Posterior vena cava (tissue), 2 donors: ENCODE measurements at regions of chr1 and their contacts with region 1.

Region 1: GRCh38 chr1:211578640-211579433 is at the start of gene SLC30A1:
- DNase-seq: peak; percentile 100
- total RNA-seq, gene SLC30A1: 20.7 to 25.8 TPM

Region 2: DNA sequence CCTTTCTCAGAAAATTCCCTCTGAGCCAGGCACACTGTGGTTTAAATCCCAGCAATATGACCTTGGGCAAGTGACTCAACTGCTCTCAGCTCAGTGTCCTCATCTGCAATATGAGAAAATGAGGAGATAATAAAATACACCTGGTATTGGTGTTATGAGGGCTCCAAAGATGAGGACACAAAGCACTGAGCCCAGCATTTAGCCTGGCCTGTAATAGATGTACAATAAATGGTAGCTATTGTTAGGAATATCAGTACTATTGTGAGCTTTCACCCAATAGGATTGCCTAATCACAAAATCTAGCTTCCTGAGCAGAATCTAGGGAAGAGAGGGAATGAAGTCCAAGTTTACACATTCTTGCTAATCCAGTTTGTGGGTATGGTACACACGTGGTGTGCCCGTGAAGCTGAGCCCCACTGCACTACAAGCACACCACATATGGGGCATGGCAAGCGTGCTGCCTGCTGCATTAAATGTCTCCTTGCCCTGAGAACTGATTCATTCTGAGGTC is 24.4 kb after region 1 on chr1:
- intact Hi-C with region 1: no loop called
- DNase-seq: no peak

Region 3: GRCh38 chr1:211648980-211649934 is 70.4 kb after region 1 on chr1:
- intact Hi-C with region 1: loop called (anchors 2 to 10 kb)
- DNase-seq: no peak

Region 4: DNA sequence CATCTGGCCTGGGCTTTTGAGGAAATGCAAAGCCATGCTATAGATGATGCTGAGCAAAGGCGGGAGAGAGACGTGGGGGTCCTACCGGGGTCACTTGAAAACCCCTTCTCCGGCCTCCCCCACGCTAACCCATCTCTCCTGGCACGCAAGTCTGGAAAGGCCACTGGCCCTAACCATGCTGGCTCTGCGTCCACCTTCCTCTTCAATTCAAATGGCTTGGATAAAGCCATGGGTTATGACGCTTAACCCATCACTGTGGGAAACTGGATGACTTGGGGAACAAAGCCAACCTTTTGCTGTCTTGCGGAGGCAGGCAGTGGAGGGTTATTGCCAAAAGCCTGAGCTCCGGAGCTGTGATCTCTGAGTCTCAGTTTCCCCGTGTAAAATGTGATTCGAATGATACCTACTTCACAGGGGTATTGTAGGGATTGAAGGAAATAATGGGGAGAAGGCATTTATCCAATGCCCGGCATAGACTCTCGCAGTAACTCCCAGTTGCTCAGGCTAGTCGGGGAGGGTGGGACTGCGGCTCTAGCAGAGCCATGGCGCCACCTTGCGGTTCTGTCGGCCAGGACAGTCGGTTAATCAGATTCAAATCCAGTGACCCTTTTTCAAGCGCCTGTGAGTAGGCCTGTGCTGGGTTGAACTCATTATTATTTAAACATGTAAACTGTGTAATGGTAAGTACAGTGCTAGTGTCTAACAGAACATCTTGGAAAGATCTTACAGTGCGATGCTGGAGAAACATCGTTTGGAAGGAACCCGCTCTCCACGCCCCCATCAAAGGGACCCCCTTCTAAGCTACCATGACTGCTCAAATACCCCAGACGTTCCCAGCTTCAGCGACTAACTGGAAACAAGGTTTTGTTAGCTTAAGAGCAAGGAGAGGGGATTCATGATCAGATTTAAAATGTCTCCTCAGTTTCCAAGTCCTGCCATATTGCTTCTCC is 76.3 kb after region 1 on chr1:
- intact Hi-C with region 1: loop called in 1 of 2 experiments (anchors 10 kb)
- DNase-seq: peak; percentile 97

Region 5: GRCh38 chr1:212760126-212760823 is 1181.4 kb after region 1 on chr1:
- intact Hi-C with region 1: loop called in 1 of 2 experiments (anchors 10 kb)
- DNase-seq: no peak